Esophagus muscularis mucosa (tissue), 4 donors: ENCODE measurements at regions of chr10 and their contacts with region 1.

Region 1: DNA sequence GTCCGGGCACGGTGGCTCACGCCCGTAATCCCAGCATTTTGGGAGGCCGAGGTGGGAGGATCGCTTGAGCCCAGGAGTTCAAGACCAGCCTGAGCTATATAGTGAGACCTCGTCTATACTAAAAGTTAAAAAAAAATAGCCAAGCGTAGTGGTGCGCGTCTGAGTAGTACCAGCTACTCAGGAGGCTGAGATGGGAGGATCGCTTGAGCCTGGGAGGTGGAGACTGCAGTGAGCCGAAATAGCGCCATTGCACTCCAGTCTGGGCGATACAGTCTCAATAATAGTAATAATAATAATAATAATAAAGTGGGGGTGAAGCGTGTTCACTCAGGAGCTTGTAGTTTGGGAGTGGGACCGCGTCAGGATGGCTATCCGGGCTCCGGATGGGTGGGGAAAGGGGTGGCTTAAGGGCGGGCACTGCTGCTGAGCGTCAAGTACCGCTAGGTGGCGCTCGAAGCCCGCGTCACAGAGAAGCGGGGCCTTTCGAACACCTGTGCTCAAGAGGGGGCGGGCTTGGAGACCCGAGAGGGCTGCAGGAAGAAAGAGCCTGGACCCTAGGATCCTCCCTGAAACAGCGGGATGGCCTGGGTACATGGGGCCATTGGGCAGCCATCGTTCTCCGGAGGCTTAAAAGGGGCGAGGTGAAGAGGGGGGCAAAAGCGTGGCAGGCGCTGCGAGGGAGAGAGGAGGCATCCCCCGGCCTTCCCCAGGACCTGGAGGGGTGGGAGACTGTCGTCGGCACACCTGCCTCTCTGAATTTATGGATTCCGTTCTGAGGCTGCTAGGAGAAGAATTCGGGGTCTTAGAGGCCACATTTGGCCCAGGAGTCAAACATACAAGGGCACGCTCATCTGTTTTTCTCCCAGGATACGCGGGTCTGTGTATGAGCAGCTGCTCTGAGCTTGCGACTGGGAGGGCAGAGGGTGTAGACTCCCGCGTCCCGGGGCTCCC is 14.5 kb downstream of the LBX1 start:
- DNase-seq: no peak
- H3K4me3 ChIP-seq: peak overlapping the region in 3 of 4 donors; percentile 1 to 35 (median 20)
- H3K27ac ChIP-seq: no peak overlapping the region
- H3K4me1 ChIP-seq: peaks cover 32 to 51% (median 50%) of the 10 kb centered on the region in 4 donors
- H3K27me3 ChIP-seq: peaks cover 12 to 99% (median 76%) of the 10 kb centered on the region in 4 donors
- CTCF ChIP-seq: peak; percentile 65 to 89 (median 78)
- EP300 ChIP-seq: no peak
- POLR2A ChIP-seq: no peak

Region 2: GRCh38 chr10:101291331-101292193 is 76.8 kb after region 1 on chr10:
- intact Hi-C with region 1: loop called (anchors 5 kb)
- DNase-seq: no peak
- H3K4me3 ChIP-seq: peak overlapping the region; percentile 60 to 69 (median 62)
- H3K27ac ChIP-seq: no peak overlapping the region
- H3K4me1 ChIP-seq: peaks cover 18 to 24% (median 23%) of the 10 kb centered on the region in 4 donors
- H3K27me3 ChIP-seq: peaks cover 0 to 100% (median 25%) of the 10 kb centered on the region in 4 donors
- CTCF ChIP-seq: peak; percentile 42 to 61 (median 60)
- EP300 ChIP-seq: no peak
- POLR2A ChIP-seq: no peak

Region 3: DNA sequence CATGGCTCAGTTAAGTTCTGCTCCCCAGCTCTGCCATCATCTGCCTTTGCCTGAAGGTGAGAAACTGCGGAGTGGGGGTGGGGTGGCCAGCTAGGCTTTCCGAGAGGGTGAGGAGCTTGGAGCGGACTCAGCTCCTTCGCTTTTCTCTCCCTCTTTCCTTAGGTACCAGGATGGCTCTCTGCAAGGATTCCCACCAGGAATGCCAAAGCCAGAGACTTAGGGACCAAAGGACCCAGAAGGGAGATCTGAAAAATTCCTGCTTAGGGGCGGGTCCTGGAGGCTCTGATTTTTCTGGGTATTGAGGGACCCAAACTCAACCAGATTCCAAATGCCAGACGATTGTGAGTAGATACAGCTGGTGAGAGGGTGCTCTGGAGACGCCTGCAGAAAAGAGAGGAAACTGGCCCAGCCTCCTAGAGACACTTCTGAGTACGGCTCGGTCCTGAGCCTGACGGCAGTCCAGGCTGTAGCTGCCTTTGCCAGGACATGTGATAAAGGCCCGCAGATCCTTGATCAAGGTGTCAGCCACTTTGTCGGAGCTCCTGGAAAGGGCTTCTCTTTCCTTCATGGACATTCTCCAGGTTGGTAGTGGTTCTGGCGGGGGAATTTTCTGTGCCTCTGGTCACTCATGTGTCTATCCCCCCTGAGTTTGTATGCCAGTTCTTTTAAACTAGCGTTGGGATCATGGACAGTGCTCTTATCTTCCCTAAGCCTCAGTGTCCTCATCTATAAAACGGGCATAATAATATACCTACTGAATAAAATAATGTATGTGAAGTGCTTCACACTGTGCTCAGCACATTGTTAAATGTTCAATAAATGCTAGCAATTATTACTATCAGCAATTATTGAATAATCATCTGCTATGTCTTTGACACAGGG is 96.7 kb after region 1 on chr10:
- intact Hi-C with region 1: no loop called
- DNase-seq: no peak
- H3K4me3 ChIP-seq: peak overlapping the region; percentile 13 to 43 (median 36)
- H3K27ac ChIP-seq: no peak overlapping the region
- H3K4me1 ChIP-seq: peaks cover 0 to 18% (median 15%) of the 10 kb centered on the region in 4 donors
- H3K27me3 ChIP-seq: peaks cover 0 to 75% (median 0%) of the 10 kb centered on the region in 4 donors
- CTCF ChIP-seq: no peak
- EP300 ChIP-seq: no peak
- POLR2A ChIP-seq: no peak

Region 4: GRCh38 chr10:101353692-101354327 is 139.1 kb after region 1 on chr10 and contains the start of gene BTRC:
- intact Hi-C with region 1: loop called (anchors 10 kb)
- DNase-seq: peak; percentile 99
- H3K4me3 ChIP-seq: peak within 1 kb of the TSS; percentile 78 to 97 (median 92)
- H3K27ac ChIP-seq: peak within 1 kb of the TSS; percentile 89 to 96 (median 90)
- H3K4me1 ChIP-seq: peaks cover 16 to 35% (median 22%) of the 10 kb centered on the region in 4 donors
- H3K27me3 ChIP-seq: no peaks in the 10 kb centered on the region
- CTCF ChIP-seq: no peak
- EP300 ChIP-seq: no peak
- POLR2A ChIP-seq: peak; percentile 53
- total RNA-seq, gene BTRC: 10.1 to 20.0 (median 10.4) TPM

Region 5: GRCh38 chr10:101380353-101381017 is 165.8 kb after region 1 on chr10:
- intact Hi-C with region 1: no loop called
- DNase-seq: no peak
- H3K4me3 ChIP-seq: no peak overlapping the region
- H3K27ac ChIP-seq: no peak overlapping the region
- H3K4me1 ChIP-seq: peaks cover under 1 to 22% (median 18%) of the 10 kb centered on the region in 4 donors
- H3K27me3 ChIP-seq: no peaks in the 10 kb centered on the region
- CTCF ChIP-seq: no peak
- EP300 ChIP-seq: no peak
- POLR2A ChIP-seq: no peak

Region 6: DNA sequence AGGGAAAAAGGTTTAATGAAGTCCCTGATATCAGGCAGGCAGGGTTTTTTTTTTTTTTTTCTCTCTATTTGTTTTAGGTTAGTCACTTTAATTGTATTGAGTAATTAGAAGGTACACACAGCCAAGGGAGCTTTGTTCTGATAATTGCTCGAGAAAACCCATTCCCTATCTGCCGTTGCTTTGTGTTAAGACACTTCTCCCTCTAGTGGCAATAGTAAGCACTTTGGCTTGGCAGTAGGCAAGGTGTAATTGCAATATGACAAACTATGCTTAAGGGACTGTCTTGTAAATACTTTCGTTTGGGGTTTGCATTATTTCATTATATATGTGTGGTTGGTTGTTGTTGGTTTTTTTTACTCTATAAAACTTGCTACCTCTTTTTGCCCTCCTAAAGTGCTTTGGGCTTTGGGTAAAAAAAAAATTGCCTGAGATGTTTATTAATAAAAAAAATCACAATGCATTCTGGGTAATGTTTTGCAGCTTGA is 252.6 kb after region 1 on chr10:
- intact Hi-C with region 1: loop called (anchors 5 kb)
- DNase-seq: no peak
- H3K4me3 ChIP-seq: no peak overlapping the region
- H3K27ac ChIP-seq: no peak overlapping the region
- H3K4me1 ChIP-seq: peaks cover 11 to 16% (median 15%) of the 10 kb centered on the region in 4 donors
- H3K27me3 ChIP-seq: no peaks in the 10 kb centered on the region
- CTCF ChIP-seq: peak; percentile 72 to 81 (median 81)
- EP300 ChIP-seq: no peak
- POLR2A ChIP-seq: no peak

Region 7: DNA sequence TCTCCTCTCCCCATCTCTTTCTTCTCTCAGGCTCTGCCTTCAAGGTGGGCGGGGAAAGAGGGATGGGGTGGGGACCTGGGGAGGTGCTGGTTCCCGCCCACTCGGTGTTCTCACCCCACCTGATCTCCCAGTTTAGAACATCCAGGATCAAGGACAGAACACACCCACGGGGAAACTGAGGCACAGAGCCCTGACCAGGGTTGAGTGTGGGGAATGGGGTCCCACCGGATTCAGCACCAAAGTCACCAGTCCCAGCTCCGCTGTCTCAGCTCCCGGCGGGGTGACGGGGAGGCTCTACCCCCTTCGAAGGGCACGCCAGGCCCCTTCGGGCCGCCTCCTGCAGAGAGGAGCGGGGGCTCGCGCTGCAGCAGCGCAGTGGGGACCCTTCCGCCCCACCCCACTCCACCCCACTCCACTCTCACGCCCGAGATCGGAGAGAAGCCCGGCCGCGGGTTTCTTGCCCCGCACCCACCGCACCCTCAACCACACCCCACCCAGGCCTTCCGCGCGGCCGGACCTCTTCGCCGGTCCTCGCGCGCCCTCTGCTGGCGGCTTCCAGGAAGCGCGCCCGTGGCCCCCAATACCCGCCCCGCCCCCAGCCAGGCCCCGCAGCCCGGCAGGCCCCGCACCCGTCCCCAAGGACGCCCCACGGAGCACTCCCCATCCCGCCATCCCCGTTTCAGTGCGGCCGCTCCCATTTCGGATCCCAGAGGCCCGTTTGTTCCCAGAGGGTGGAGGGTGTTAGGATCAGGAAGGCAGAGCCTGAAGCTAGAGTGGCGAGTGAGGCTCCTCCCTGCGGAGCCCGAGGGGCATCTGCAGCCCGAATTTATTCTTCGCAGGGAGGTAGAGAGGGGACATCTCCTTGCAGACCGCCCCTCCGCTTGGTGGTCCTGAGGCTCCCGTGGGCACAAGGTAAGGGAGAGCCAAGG is 355.4 kb after region 1 on chr10:
- intact Hi-C with region 1: loop called (anchors 1 kb)
- DNase-seq: peak; percentile 95
- H3K4me3 ChIP-seq: peak overlapping the region; percentile 55 to 66 (median 58)
- H3K27ac ChIP-seq: no peak overlapping the region
- H3K4me1 ChIP-seq: peaks cover 23 to 33% (median 29%) of the 10 kb centered on the region in 4 donors
- H3K27me3 ChIP-seq: peaks cover 6 to 59% (median 35%) of the 10 kb centered on the region in 4 donors
- CTCF ChIP-seq: peak in 2 of 3 experiments; percentile 79 to 99
- EP300 ChIP-seq: no peak
- POLR2A ChIP-seq: no peak

Region 8: GRCh38 chr10:101782811-101783735 is 568.4 kb after region 1 on chr10 and contains the start of gene NPM3:
- intact Hi-C with region 1: loop called (anchors 10 kb)
- DNase-seq: peak; percentile 97
- H3K4me3 ChIP-seq: peak within 1 kb of the TSS; percentile 60 to 74 (median 64)
- H3K27ac ChIP-seq: peak within 1 kb of the TSS; percentile 32 to 69 (median 42)
- H3K4me1 ChIP-seq: peaks cover 42 to 66% (median 59%) of the 10 kb centered on the region in 4 donors
- H3K27me3 ChIP-seq: peaks cover 0 to 18% (median 10%) of the 10 kb centered on the region in 4 donors
- CTCF ChIP-seq: peak in 1 of 3 experiments; percentile 5
- EP300 ChIP-seq: no peak
- POLR2A ChIP-seq: no peak
- total RNA-seq, gene NPM3: 15.6 to 31.5 (median 16.5) TPM